ENCODE measurements at regions of chr4 and their contacts with region 1.

Region 1: GRCh38 chr4:155367608-155368007 is 9.2 kb downstream of the MAP9 start:
- DNase-seq: no peak
- ATAC-seq: peak in 2 of 4 donors; percentile 13 to 35
- H3K4me3 ChIP-seq: no peak overlapping the region
- H3K27ac ChIP-seq: no peak overlapping the region
- H3K4me1 ChIP-seq: no peaks in the 10 kb centered on the region
- H3K27me3 ChIP-seq: no peaks in the 10 kb centered on the region
- CTCF ChIP-seq: no peak

Region 2: DNA sequence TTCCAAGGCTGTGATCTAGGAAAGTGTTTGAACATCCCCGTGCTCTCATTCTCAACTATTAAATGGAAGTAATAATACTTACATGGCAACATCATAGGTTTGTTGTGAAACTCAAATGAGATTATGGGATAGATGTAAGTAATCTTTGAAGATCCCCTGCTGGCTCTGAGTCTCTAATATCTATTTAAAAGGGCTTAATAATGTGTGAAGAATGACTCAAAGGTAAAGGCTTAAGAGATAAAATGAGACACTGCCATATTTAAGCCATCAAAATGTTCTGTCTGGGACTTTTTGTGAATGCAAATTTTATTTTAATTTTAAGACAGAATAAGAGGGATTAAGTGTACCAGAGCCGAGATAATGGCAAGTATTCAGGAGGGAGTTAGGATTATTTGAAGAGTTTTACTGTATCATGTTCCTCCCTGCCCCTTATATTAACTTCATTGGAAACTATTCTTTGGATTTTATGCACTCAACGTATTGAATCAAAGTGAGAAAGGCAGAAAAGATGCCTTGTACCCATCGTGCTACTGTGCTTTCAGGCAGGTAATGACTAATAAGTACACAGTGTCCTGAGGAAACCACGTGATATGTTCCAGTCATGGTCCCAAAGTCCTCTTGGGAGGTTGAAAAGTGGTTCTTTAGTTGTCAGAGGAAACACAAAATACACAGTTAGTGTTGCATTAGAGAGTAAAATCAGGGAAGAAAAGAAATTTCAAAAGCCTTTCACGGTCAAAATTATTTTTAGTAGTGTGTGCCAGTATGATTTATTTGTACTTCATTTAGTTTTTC is 394.2 kb before region 1 on chr4:
- intact Hi-C with region 1: loop called in 1 of 3 experiments (anchors 10 kb)
- DNase-seq: no peak
- ATAC-seq: peak in 2 of 4 donors; percentile 61 to 65
- H3K4me3 ChIP-seq: no peak overlapping the region
- H3K27ac ChIP-seq: no peak overlapping the region
- H3K4me1 ChIP-seq: no peaks in the 10 kb centered on the region
- H3K27me3 ChIP-seq: no peaks in the 10 kb centered on the region
- CTCF ChIP-seq: no peak

Measured in pancreas (tissue), 10 donors.